Activated CD8-positive, alpha-beta T cell treated with anti-CD3 and anti-CD28 coated beads, Interleukin-2, amount 10 ng/mL, durations not matched to agents 7 days and 5 days (primary cell): ENCODE measurements at regions of chr14 and their contacts with region 1.

Region 1: GRCh38 chr14:58395812-58396788 is at the start of gene TOMM20L:
- DNase-seq: peak; percentile 74
- ATAC-seq: peak; percentile 97
- H3K4me3 Mint-ChIP-seq: peak within 1 kb of the TSS; percentile 66
- H3K27ac Mint-ChIP-seq: peak within 1 kb of the TSS; percentile 64
- H3K4me1 Mint-ChIP-seq: peaks cover 12% of the 10 kb centered on the region
- H3K27me3 Mint-ChIP-seq: peaks cover 3% of the 10 kb centered on the region
- total RNA-seq, gene TOMM20L: not detected

Region 2: DNA sequence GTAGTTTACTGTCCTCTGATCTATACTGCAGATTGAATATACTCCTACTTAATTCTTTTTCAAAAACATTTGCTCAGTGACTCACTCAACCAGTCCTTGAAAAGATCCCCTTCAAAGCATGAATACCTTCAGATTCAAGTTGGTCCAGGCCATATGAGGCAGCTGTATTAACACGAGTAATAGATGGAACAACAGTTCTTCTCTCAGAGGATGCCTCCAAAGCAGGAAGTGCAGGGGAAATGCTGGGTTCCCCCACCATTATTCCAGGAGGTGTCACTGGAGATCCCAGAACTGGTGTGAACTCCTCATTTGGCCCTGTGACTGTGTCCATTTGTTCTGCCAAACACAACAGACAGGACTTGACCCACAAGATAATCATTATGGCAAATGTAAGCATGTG is 264.7 kb before region 1 on chr14:
- CTCF ChIA-PET with region 1: no interaction called
- POLR2A ChIA-PET with region 1: no interaction called
- DNase-seq: no peak
- ATAC-seq: no peak
- H3K4me3 Mint-ChIP-seq: no peak overlapping the region
- H3K27ac Mint-ChIP-seq: no peak overlapping the region
- H3K4me1 Mint-ChIP-seq: no peaks in the 10 kb centered on the region
- H3K27me3 Mint-ChIP-seq: peaks cover 2% of the 10 kb centered on the region

Region 3: DNA sequence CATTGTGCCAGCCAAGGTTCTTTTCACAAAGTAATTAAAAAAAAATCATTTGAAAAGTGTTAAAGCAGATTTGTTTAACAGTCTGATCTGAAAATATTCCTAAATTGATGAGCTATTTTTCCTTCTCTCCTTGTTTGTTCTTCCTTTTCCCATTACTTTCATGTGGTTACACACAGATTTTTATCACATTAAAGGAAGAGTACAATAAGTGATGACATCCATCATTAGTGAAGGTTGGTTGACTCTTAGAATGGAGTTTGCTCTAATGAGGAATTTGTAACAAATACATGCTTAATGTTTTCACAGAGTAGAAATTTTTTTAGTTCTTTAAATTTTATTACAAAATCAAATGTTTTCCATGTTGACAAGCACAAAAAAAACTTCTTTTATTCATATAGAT is 19.3 kb before region 1 on chr14:
- CTCF ChIA-PET with region 1: interaction called, 16 read pairs
- POLR2A ChIA-PET with region 1: no interaction called
- DNase-seq: no peak
- ATAC-seq: no peak
- H3K4me3 Mint-ChIP-seq: no peak overlapping the region
- H3K27ac Mint-ChIP-seq: no peak overlapping the region
- H3K4me1 Mint-ChIP-seq: no peaks in the 10 kb centered on the region
- H3K27me3 Mint-ChIP-seq: no peaks in the 10 kb centered on the region

Region 4: GRCh38 chr14:58408681-58409215 is 12.6 kb after region 1 on chr14:
- CTCF ChIA-PET with region 1: interaction called, 31 read pairs
- POLR2A ChIA-PET with region 1: no interaction called
- DNase-seq: no peak
- ATAC-seq: no peak
- H3K4me3 Mint-ChIP-seq: no peak overlapping the region
- H3K27ac Mint-ChIP-seq: no peak overlapping the region
- H3K4me1 Mint-ChIP-seq: no peaks in the 10 kb centered on the region
- H3K27me3 Mint-ChIP-seq: no peaks in the 10 kb centered on the region

Region 5: GRCh38 chr14:58427281-58428117 is 31.4 kb after region 1 on chr14 and contains the starts of genes KIAA0586 and TIMM9:
- CTCF ChIA-PET with region 1: interaction called, 5 read pairs
- POLR2A ChIA-PET with region 1: interaction called, 12 read pairs
- DNase-seq: peak; percentile 98
- ATAC-seq: peak; percentile 93
- H3K4me3 Mint-ChIP-seq: peak within 1 kb of the TSS; percentile 91
- H3K27ac Mint-ChIP-seq: peak within 1 kb of the TSS; percentile 95
- H3K4me1 Mint-ChIP-seq: peaks cover 37% of the 10 kb centered on the region
- H3K27me3 Mint-ChIP-seq: no peaks in the 10 kb centered on the region
- total RNA-seq, gene KIAA0586: 24.9 to 27.0 TPM
- total RNA-seq, gene TIMM9: 34.6 to 37.7 TPM